ENCODE measurements at regions of chr6 and their contacts with region 1.

Region 1: DNA sequence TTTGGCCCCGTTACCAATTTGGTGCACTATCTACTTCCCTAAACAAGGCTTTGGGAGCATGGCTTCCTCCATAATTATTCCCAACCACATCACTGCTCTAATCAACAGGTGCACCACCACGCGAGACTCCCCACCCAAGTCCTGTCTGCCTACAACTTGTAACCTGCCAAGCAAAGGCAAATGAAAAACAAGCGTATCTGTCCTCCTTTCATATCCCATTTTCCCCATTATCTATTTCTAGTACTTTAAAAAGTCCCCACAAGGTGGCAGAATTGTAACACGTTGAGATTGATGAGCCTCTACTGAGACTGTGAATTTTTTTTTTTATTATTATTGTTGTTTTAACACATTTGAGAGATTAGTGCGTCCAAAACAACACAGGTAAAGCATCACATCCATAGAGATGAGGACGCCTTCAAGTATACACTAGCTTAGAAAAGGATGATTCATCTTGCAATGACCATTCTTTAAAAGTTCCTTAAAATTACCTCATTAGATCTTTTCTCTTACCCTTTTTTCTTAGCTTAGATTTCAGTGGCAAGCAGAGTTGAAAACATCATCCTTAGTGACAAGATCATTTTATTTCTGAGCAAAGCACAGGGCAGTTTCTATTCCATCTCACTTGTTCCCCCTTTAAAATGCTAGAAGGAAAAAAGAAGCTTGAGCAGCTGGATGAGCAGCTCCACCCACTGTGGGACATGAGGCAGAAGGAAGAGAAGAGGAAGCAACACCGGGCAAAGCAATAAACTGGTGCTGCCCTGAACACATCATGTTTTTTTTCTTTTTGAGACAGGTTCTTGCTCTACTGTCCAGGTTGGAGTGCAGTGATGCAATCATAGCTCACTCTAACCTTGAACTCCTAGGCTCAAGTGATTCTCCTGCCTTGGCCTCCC is 210.8 kb downstream of the ARHGAP18 start:
- DNase-seq: no peak
- H3K4me3 ChIP-seq: peak overlapping the region in 23 of 59 donors; percentile 4 to 47 (median 26)
- H3K27ac ChIP-seq: peak overlapping the region in 26 of 59 donors; percentile 1 to 91 (median 28)
- H3K27me3 ChIP-seq: no peaks in the 10 kb centered on the region
- CTCF ChIP-seq: peak; percentile 58 to 88 (median 75)

Region 2: DNA sequence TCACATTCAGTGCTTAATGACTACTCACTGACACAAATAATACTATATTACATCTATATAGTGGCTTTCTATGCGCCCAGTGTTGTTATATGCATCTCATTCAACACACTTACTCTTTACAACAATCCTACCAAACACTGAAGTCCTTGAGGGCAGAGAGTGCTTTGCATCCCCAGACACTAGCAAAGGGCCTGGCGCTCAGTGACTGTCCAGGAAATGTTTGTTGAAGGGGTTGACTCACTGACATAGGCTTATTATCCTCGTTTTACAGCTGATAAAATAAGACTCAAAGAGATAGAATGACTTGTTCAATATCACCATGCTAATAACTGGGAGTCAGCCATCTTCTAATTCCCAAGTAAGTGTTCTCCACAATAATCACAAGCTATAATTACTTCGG is 47.5 kb after region 1 on chr6:
- intact Hi-C with region 1: no loop called
- DNase-seq: no peak
- H3K4me3 ChIP-seq: no peak overlapping the region
- H3K27ac ChIP-seq: no peak overlapping the region
- H3K27me3 ChIP-seq: no peaks in the 10 kb centered on the region
- CTCF ChIP-seq: no peak

Region 3: GRCh38 chr6:129575378-129576118 is 76.4 kb after region 1 on chr6:
- intact Hi-C with region 1: loop called (anchors 2 kb)
- DNase-seq: no peak
- H3K4me3 ChIP-seq: peak overlapping the region in 52 of 59 donors; percentile 0 to 61 (median 37)
- H3K27ac ChIP-seq: no peak overlapping the region
- H3K27me3 ChIP-seq: no peaks in the 10 kb centered on the region
- CTCF ChIP-seq: peak; percentile 54 to 90 (median 78)

Region 4: DNA sequence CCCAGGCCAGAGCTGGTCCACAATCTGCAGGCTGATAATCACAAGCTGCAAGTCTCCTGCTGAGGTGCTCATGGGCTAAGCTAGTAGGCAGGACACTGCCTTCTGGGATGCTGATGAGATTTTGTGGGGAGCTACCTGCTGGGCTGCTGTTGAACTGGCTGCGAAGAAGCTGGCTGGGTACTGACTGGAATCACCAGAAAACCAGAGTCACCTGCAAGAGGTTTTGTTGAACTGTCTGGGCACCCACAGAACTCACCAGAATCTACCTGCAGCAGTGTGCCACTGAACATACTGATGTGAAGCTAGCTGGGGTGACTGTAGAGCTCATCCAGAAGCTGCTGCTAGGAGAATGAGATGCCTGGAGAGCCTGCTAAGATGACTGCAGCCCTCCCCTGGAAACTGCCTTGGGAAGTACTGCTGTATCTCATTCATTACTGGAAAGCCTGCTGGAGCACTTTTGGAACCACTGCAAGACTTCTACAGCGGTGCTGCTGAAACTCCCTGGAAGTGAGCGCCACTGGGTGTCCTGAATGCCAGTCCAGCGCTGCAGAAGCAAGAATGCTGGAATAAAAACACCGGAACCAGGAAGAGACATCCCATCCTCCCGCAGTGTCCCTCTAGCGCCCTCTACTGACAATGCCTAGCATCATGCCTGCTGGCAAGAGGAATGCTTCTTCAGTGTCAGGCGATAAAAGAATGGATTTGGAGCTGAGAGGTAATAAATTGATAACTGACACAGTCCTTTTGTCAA is 275.7 kb after region 1 on chr6:
- intact Hi-C with region 1: loop called in 1 of 2 experiments (anchors 10 kb)
- DNase-seq: peak; percentile 31 to 81 (median 72)
- H3K4me3 ChIP-seq: peak overlapping the region in 40 of 59 donors; percentile 1 to 57 (median 34)
- H3K27ac ChIP-seq: peak overlapping the region in 22 of 59 donors; percentile 8 to 70 (median 35)
- H3K27me3 ChIP-seq: no peaks in the 10 kb centered on the region
- CTCF ChIP-seq: peak; percentile 44 to 95 (median 86)